CD4-positive, alpha-beta T cell (primary cell): ENCODE measurements at regions of chr17 and their contacts with region 1.

Region 1: GRCh38 chr17:79196913-79197312 is 122.3 kb downstream of the ENGASE start:
- DNase-seq: no peak
- ATAC-seq: no peak
- H3K4me3 ChIP-seq: no peak overlapping the region
- H3K4me3 Mint-ChIP-seq: no peak overlapping the region
- H3K27ac ChIP-seq: no peak overlapping the region
- H3K27ac Mint-ChIP-seq: no peak overlapping the region
- H3K4me1 ChIP-seq: no peaks in the 10 kb centered on the region
- H3K4me1 Mint-ChIP-seq: no peaks in the 10 kb centered on the region
- H3K27me3 ChIP-seq: peaks cover 14 to 20% of the 10 kb centered on the region in 2 experiments
- H3K27me3 Mint-ChIP-seq: peaks cover 55% of the 10 kb centered on the region
- CTCF ChIP-seq: no peak

Region 2: GRCh38 chr17:79174905-79175856 is 21.7 kb before region 1 on chr17:
- CTCF ChIA-PET with region 1: no interaction called
- POLR2A ChIA-PET with region 1: no interaction called
- intact Hi-C with region 1: loop called in 1 of 2 experiments (anchors 1 kb)
- DNase-seq: no peak
- ATAC-seq: no peak
- H3K4me3 ChIP-seq: no peak overlapping the region
- H3K4me3 Mint-ChIP-seq: no peak overlapping the region
- H3K27ac ChIP-seq: no peak overlapping the region
- H3K27ac Mint-ChIP-seq: no peak overlapping the region
- H3K4me1 ChIP-seq: no peaks in the 10 kb centered on the region
- H3K4me1 Mint-ChIP-seq: no peaks in the 10 kb centered on the region
- H3K27me3 ChIP-seq: no peaks in the 10 kb centered on the region
- H3K27me3 Mint-ChIP-seq: peaks cover 2% of the 10 kb centered on the region
- CTCF ChIP-seq: no peak